ENCODE measurements at regions of chr5 and their contacts with region 1.

Region 1: DNA sequence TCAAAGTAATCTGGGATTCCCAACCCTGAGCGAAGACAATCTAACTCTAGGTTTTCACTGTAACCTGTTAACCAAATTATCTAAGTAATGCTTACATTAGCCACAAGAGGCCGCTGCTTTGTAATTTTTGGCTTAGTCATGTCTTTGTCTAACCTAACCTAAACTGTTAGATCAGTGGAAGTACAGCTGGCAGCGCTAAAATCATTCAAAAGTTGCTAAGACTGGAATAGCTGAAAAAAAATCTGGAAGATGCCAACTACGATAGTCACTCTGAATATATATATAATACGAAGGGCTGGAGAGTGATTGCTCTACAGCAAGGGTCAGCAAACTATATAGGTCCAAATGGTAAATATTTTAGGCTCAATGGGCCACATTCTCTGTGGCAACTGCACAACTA is 60.2 kb downstream of the FBXO38 start:
- DNase-seq: peak; percentile 14
- H3K4me3 ChIP-seq: no peak overlapping the region
- CTCF ChIP-seq: peak; percentile 63

Region 2: DNA sequence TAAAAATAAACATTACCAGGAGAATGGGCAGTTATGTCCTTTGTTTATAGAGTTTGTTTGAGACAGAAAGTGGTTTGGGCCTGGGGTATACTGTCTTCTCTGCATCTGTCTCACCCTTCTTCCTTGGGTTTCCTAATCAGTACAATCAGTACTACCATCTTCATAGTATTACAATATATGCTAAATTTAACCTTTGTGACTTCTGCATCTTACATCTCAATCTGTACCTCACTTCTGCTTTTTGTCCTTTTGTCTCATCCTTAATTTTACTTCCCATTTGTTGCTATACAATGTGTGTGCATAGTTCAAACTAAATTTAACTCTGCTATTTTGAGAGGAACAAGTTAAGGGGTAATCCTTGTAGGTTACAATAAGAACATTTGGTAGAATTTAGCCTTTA is 40.7 kb before region 1 on chr5:
- CTCF ChIA-PET with region 1: interaction called, 15 read pairs
- POLR2A ChIA-PET with region 1: no interaction called
- DNase-seq: no peak
- H3K4me3 ChIP-seq: no peak overlapping the region
- CTCF ChIP-seq: no peak

Region 3: GRCh38 chr5:148425808-148426207 is 18.2 kb before region 1 on chr5:
- CTCF ChIA-PET with region 1: interaction called, 76 read pairs
- POLR2A ChIA-PET with region 1: no interaction called
- DNase-seq: no peak
- H3K4me3 ChIP-seq: no peak overlapping the region
- CTCF ChIP-seq: no peak

Region 4: GRCh38 chr5:148482691-148483462 is 38.9 kb after region 1 on chr5:
- CTCF ChIA-PET with region 1: interaction called, 20 read pairs
- POLR2A ChIA-PET with region 1: no interaction called
- DNase-seq: no peak
- H3K4me3 ChIP-seq: no peak overlapping the region
- CTCF ChIP-seq: peak; percentile 75

Region 5: GRCh38 chr5:148681157-148682057 is 237.4 kb after region 1 on chr5:
- CTCF ChIA-PET with region 1: no interaction called
- POLR2A ChIA-PET with region 1: no interaction called
- DNase-seq: no peak
- H3K4me3 ChIP-seq: no peak overlapping the region
- CTCF ChIP-seq: no peak

Measured in AG04449 (cell line).